ENCODE measurements at regions of chr2 and their contacts with region 1.

Region 1: DNA sequence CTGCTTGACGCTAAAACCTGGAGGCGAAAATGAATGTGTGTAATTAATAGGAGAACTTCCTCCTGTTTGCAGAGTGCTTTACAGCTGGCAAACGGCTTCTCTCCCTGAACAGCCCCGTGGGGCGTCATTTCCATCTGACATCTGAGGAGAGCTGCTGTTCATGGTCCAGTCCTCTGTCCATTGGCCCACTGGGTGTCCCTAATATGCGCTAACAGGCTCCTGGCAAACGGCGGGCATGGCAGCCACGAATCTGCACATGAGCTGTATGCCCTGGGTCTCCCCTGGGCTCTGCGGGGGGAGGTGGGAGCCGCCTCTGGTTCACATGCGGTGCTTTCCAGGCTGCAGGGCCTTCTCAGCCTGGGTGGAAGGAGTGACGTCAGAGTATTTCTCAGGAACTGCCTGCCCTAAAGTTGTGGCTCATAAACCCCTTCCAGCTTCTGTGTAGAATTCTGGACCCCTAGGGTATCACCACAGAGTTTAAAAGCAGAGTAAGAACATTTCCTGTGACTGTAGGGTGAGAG is 73.2 kb downstream of the LRRFIP1 start:
- DNase-seq: peak; percentile 76
- H3K4me3 Mint-ChIP-seq: peak overlapping the region; percentile 78
- H3K27ac Mint-ChIP-seq: peak overlapping the region; percentile 96
- H3K4me1 Mint-ChIP-seq: peaks cover 93% of the 10 kb centered on the region
- H3K27me3 Mint-ChIP-seq: no peaks in the 10 kb centered on the region

Region 2: GRCh38 chr2:237662671-237663093 is 37.9 kb before region 1 on chr2:
- intact Hi-C with region 1: loop called (anchors 5 kb)
- DNase-seq: no peak
- H3K4me3 Mint-ChIP-seq: no peak overlapping the region
- H3K27ac Mint-ChIP-seq: no peak overlapping the region
- H3K4me1 Mint-ChIP-seq: peaks cover 14% of the 10 kb centered on the region
- H3K27me3 Mint-ChIP-seq: peaks cover 32% of the 10 kb centered on the region

Region 3: GRCh38 chr2:237731663-237732062 is 31.1 kb after region 1 on chr2:
- intact Hi-C with region 1: loop called (anchors 1 kb)
- DNase-seq: no peak
- H3K4me3 Mint-ChIP-seq: peak overlapping the region; percentile 40
- H3K27ac Mint-ChIP-seq: peak overlapping the region; percentile 85
- H3K4me1 Mint-ChIP-seq: peaks cover 46% of the 10 kb centered on the region
- H3K27me3 Mint-ChIP-seq: no peaks in the 10 kb centered on the region